Activated T-helper 1 cell treated with anti-CD3 and anti-CD28 coated beads, Interleukin-12 subunit alpha, Interleukin-12 subunit beta, Interleukin-2, Interleukin-4 antibody, amounts not matched to agents 30 ng/mL and 10 ng/mL and 1 ng/mL, durations not matched to agents 14 hours and 24 hours and 36 hours (primary cell): ENCODE measurements at regions of chr2 and their contacts with region 1.

Region 1: GRCh38 chr2:224885836-224886547 is 156.3 kb downstream of the DOCK10 start:
- DNase-seq: no peak
- H3K4me3 Mint-ChIP-seq: no peak overlapping the region
- H3K27ac Mint-ChIP-seq: peak overlapping the region; percentile 67
- H3K4me1 Mint-ChIP-seq: peaks cover 77% of the 10 kb centered on the region
- H3K27me3 Mint-ChIP-seq: no peaks in the 10 kb centered on the region

Region 2: GRCh38 chr2:224847961-224848850 is 37.8 kb before region 1 on chr2:
- intact Hi-C with region 1: no loop called
- DNase-seq: no peak
- H3K4me3 Mint-ChIP-seq: no peak overlapping the region
- H3K27ac Mint-ChIP-seq: no peak overlapping the region
- H3K4me1 Mint-ChIP-seq: peaks cover 12% of the 10 kb centered on the region
- H3K27me3 Mint-ChIP-seq: no peaks in the 10 kb centered on the region

Region 3: GRCh38 chr2:224901121-224901676 is 15.2 kb after region 1 on chr2:
- intact Hi-C with region 1: loop called (anchors 2 kb)
- DNase-seq: no peak
- H3K4me3 Mint-ChIP-seq: no peak overlapping the region
- H3K27ac Mint-ChIP-seq: peak overlapping the region; percentile 55
- H3K4me1 Mint-ChIP-seq: peaks cover 70% of the 10 kb centered on the region
- H3K27me3 Mint-ChIP-seq: no peaks in the 10 kb centered on the region

Region 4: GRCh38 chr2:224930990-224931389 is 45.0 kb after region 1 on chr2:
- intact Hi-C with region 1: no loop called
- DNase-seq: no peak
- H3K4me3 Mint-ChIP-seq: peak overlapping the region; percentile 63
- H3K27ac Mint-ChIP-seq: peak overlapping the region; percentile 84
- H3K4me1 Mint-ChIP-seq: peaks cover 95% of the 10 kb centered on the region
- H3K27me3 Mint-ChIP-seq: no peaks in the 10 kb centered on the region